ENCODE measurements at regions of chr10 and their contacts with region 1.

Region 1: GRCh38 chr10:48656241-48656913 is 28.3 kb upstream of the WDFY4 start:
- DNase-seq: peak; percentile 93 to 94
- H3K4me3 ChIP-seq: peak overlapping the region in 2 of 3 donors; percentile 31 to 42
- H3K27ac ChIP-seq: peak overlapping the region in 2 of 3 donors; percentile 47 to 56
- H3K4me1 ChIP-seq: peaks cover 9 to 12% of the 10 kb centered on the region in 2 donors
- H3K27me3 ChIP-seq: no peaks in the 10 kb centered on the region
- CTCF ChIP-seq: peak; percentile 51 to 100 (median 96)
- POLR2A ChIP-seq: no peak

Region 2: GRCh38 chr10:48363617-48364355 is 292.6 kb before region 1 on chr10:
- intact Hi-C with region 1: loop called (anchors 5 kb)
- DNase-seq: peak; percentile 66 to 74
- H3K4me3 ChIP-seq: no peak overlapping the region
- H3K27ac ChIP-seq: peak overlapping the region; percentile 47 to 65 (median 51)
- H3K4me1 ChIP-seq: peaks cover 37 to 39% of the 10 kb centered on the region in 2 donors
- H3K27me3 ChIP-seq: no peaks in the 10 kb centered on the region
- CTCF ChIP-seq: peak; percentile 34 to 95 (median 74)
- POLR2A ChIP-seq: no peak

Region 3: GRCh38 chr10:48444266-48444665 is 212.1 kb before region 1 on chr10:
- intact Hi-C with region 1: loop called (anchors 10 kb)
- DNase-seq: peak; percentile 58 to 60
- H3K4me3 ChIP-seq: no peak overlapping the region
- H3K27ac ChIP-seq: peak overlapping the region in 1 of 3 donors; percentile 18
- H3K4me1 ChIP-seq: peaks cover 21 to 22% of the 10 kb centered on the region in 2 donors
- H3K27me3 ChIP-seq: no peaks in the 10 kb centered on the region
- CTCF ChIP-seq: peak in 3 of 6 experiments; percentile 38 to 45 (median 39)
- POLR2A ChIP-seq: no peak

Region 4: DNA sequence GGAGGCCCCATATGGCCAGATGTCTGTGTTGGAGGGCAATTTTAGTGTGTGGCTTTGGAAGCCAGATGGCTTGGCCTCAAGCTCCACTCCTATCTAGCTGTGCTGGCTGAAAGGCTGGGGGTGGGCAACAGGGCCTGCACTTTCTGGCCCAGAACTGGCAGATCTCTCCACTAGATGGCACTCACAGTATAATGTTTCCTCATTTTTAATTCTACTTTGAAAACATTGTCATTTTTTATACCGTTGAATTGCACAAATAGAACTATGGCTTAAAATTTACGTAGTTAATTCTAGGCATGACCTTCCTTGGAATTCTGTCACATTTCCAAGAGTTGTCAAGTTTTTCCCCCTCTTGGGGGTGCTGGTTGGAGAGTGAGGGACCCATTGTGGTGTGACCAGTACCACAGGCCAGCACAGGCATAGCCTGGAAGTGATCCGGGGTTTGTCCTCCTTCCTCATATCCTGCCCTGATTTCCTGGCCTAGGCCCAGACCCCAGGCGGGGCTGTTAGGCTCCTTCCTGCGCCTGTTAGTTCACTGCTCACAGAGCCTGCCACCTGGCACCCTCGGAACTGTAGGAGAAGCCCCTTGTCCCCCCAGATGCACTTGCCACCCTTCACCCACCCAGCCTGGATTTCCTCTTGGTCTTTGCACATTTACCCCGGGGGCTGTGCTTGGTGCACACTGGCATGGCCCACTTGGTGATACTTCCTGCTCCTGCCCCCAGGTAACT is 104.4 kb before region 1 on chr10:
- intact Hi-C with region 1: loop called (anchors 2 kb)
- DNase-seq: peak; percentile 48 to 51
- H3K4me3 ChIP-seq: no peak overlapping the region
- H3K27ac ChIP-seq: no peak overlapping the region
- H3K4me1 ChIP-seq: peaks cover 0 to 3% of the 10 kb centered on the region in 2 donors
- H3K27me3 ChIP-seq: no peaks in the 10 kb centered on the region
- CTCF ChIP-seq: peak in 5 of 6 experiments; percentile 56 to 81 (median 66)
- POLR2A ChIP-seq: no peak

Measured in thyroid gland (tissue), 4 donors.